ENCODE measurements at regions of chr11 and their contacts with region 1.

Region 1: DNA sequence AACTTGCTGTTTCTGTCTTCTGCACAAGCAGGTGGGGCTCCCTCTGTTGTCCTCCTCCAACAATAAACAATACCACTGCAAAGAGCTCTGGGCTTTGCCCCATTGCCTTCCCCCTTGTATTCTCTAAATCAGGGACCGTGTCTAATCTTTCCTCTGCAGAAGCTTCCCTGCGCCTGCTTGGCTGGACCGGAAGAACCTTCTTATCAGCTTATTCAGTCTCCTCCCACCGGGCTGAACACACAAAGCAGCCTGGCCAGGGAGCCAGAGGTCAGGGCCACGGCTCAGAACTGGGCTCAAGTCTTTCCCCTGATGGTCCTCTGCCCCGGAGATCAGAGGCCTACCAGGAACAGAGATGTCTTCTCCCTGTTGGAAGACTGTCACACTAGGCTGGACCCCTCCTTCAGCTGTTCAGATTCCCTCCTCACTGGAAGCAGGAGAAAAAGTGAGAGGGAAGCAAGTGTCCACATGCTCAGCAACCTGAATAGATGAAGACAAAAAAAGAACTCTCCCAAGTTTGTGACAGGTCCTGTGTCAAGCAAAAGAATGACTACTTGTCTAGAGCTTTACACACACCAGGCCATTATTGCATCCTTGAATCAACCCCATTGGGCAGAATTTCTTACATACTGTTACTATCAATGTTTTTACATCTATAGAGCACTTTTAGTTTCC is 63.7 kb downstream of the RAB30 start:
- DNase-seq: no peak
- ATAC-seq: no peak
- H3K4me3 ChIP-seq: no peak overlapping the region
- H3K4me3 Mint-ChIP-seq: no peak overlapping the region
- H3K27ac ChIP-seq: no peak overlapping the region
- H3K27ac Mint-ChIP-seq: peak overlapping the region; percentile 16
- H3K4me1 ChIP-seq: peaks cover 14% of the 10 kb centered on the region
- H3K4me1 Mint-ChIP-seq: peaks cover 49% of the 10 kb centered on the region
- H3K27me3 ChIP-seq: no peaks in the 10 kb centered on the region
- H3K27me3 Mint-ChIP-seq: no peaks in the 10 kb centered on the region
- CTCF ChIP-seq: no peak

Region 2: GRCh38 chr11:82889133-82890001 is 118.7 kb before region 1 on chr11:
- CTCF ChIA-PET with region 1: no interaction called
- POLR2A ChIA-PET with region 1: no interaction called
- intact Hi-C with region 1: no loop called
- DNase-seq: no peak
- ATAC-seq: no peak
- H3K4me3 ChIP-seq: no peak overlapping the region
- H3K4me3 Mint-ChIP-seq: no peak overlapping the region
- H3K27ac ChIP-seq: no peak overlapping the region
- H3K27ac Mint-ChIP-seq: no peak overlapping the region
- H3K4me1 ChIP-seq: no peaks in the 10 kb centered on the region
- H3K4me1 Mint-ChIP-seq: peaks cover 7% of the 10 kb centered on the region
- H3K27me3 ChIP-seq: no peaks in the 10 kb centered on the region
- H3K27me3 Mint-ChIP-seq: no peaks in the 10 kb centered on the region
- CTCF ChIP-seq: no peak

Region 3: DNA sequence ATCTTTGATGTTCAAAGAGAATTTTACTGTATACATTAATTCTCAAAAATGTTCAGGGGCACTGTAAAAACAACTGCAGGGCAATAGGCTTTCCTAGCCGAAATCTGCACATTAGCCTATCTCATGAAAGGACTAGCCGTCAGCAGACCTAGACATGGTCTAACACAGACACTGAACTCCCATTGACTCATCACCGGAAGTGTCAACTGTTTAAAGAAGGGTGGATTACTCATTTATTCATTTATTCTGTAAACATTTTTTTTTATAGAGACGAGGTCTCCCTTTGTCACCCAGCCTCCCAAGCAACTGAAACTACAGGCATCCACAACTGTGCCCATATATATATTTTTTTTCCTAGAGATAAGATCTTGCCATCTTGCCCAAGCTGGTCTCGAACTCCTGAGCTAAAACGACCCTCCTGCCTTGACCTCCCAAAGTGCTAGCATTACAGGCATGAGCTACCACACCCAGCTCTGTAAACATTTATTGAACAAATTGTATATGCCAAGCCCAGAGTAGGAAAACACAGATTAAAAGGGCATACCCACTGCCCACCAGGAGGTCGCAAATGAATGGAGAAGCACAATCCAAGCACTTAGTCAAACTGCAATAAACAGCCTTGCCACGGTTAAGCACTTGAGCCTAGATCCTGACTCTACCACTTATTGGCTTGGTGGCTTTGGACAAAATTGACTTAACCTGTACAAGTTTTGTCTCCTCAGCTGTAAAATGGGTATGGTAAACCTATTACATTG is 37.1 kb after region 1 on chr11:
- CTCF ChIA-PET with region 1: interaction called, 3 read pairs
- POLR2A ChIA-PET with region 1: no interaction called
- intact Hi-C with region 1: loop called in 1 of 2 experiments (anchors 5 kb)
- DNase-seq: peak in 3 of 9 experiments; percentile 26 to 59 (median 57)
- ATAC-seq: peak; percentile 87
- H3K4me3 ChIP-seq: no peak overlapping the region
- H3K4me3 Mint-ChIP-seq: no peak overlapping the region
- H3K27ac ChIP-seq: no peak overlapping the region
- H3K27ac Mint-ChIP-seq: peak overlapping the region; percentile 70
- H3K4me1 ChIP-seq: peaks cover 3% of the 10 kb centered on the region
- H3K4me1 Mint-ChIP-seq: peaks cover 55% of the 10 kb centered on the region
- H3K27me3 ChIP-seq: no peaks in the 10 kb centered on the region
- H3K27me3 Mint-ChIP-seq: no peaks in the 10 kb centered on the region
- CTCF ChIP-seq: no peak

Region 4: GRCh38 chr11:83054904-83055380 is 46.9 kb after region 1 on chr11:
- CTCF ChIA-PET with region 1: no interaction called
- POLR2A ChIA-PET with region 1: interaction called, 3 read pairs
- intact Hi-C with region 1: loop called in 1 of 2 experiments (anchors 5 kb)
- DNase-seq: no peak
- ATAC-seq: no peak
- H3K4me3 ChIP-seq: no peak overlapping the region
- H3K4me3 Mint-ChIP-seq: no peak overlapping the region
- H3K27ac ChIP-seq: no peak overlapping the region
- H3K27ac Mint-ChIP-seq: no peak overlapping the region
- H3K4me1 ChIP-seq: peaks cover 9% of the 10 kb centered on the region
- H3K4me1 Mint-ChIP-seq: peaks cover 31% of the 10 kb centered on the region
- H3K27me3 ChIP-seq: no peaks in the 10 kb centered on the region
- H3K27me3 Mint-ChIP-seq: no peaks in the 10 kb centered on the region
- CTCF ChIP-seq: no peak

Region 5: DNA sequence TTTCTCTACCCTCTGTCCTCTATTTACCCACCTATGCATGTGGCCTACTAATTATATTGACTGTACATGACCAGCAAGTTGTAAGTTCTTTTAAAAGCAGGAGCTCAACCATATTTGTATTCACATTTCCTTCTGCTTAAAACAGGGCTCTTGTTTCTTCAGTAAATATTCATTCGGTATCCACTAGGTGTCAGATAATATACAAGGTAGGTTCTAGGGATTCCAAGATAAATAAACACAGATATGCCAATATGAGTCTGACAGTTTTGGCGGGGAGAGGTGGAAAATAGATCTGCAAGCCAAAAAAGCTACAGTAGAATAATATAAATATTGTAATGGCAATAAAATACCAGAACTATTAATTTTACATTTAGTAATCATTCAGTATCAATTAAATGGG is 79.0 kb after region 1 on chr11:
- CTCF ChIA-PET with region 1: no interaction called
- POLR2A ChIA-PET with region 1: no interaction called
- intact Hi-C with region 1: no loop called
- DNase-seq: peak in 1 of 9 experiments; percentile 16
- ATAC-seq: no peak
- H3K4me3 ChIP-seq: no peak overlapping the region
- H3K4me3 Mint-ChIP-seq: no peak overlapping the region
- H3K27ac ChIP-seq: no peak overlapping the region
- H3K27ac Mint-ChIP-seq: peak overlapping the region; percentile 19
- H3K4me1 ChIP-seq: no peaks in the 10 kb centered on the region
- H3K4me1 Mint-ChIP-seq: peaks cover 21% of the 10 kb centered on the region
- H3K27me3 ChIP-seq: no peaks in the 10 kb centered on the region
- H3K27me3 Mint-ChIP-seq: no peaks in the 10 kb centered on the region
- CTCF ChIP-seq: no peak

Region 6: GRCh38 chr11:83852775-83853442 is 844.9 kb after region 1 on chr11:
- CTCF ChIA-PET with region 1: no interaction called
- POLR2A ChIA-PET with region 1: no interaction called
- intact Hi-C with region 1: no loop called
- DNase-seq: no peak
- ATAC-seq: no peak
- H3K4me3 ChIP-seq: no peak overlapping the region
- H3K4me3 Mint-ChIP-seq: no peak overlapping the region
- H3K27ac ChIP-seq: no peak overlapping the region
- H3K27ac Mint-ChIP-seq: no peak overlapping the region
- H3K4me1 ChIP-seq: no peaks in the 10 kb centered on the region
- H3K4me1 Mint-ChIP-seq: no peaks in the 10 kb centered on the region
- H3K27me3 ChIP-seq: no peaks in the 10 kb centered on the region
- H3K27me3 Mint-ChIP-seq: no peaks in the 10 kb centered on the region
- CTCF ChIP-seq: no peak